ENCODE measurements at regions of chr11 and their contacts with region 1.

Region 1: GRCh38 chr11:58286249-58286648 is 18.2 kb upstream of the OR10W1 start:
- DNase-seq: peak in 1 of 3 donors; percentile 47
- ATAC-seq: peak; percentile 96
- H3K4me3 ChIP-seq: no peak overlapping the region
- H3K4me1 ChIP-seq: no peaks in the 10 kb centered on the region
- CTCF ChIP-seq: peak; percentile 53

Region 2: GRCh38 chr11:57815476-57815875 is 470.8 kb before region 1 on chr11:
- intact Hi-C with region 1: loop called in 1 of 2 experiments (anchors 5 kb)
- DNase-seq: no peak
- ATAC-seq: no peak
- H3K4me3 ChIP-seq: no peak overlapping the region
- H3K4me1 ChIP-seq: no peaks in the 10 kb centered on the region
- CTCF ChIP-seq: no peak

Region 3: DNA sequence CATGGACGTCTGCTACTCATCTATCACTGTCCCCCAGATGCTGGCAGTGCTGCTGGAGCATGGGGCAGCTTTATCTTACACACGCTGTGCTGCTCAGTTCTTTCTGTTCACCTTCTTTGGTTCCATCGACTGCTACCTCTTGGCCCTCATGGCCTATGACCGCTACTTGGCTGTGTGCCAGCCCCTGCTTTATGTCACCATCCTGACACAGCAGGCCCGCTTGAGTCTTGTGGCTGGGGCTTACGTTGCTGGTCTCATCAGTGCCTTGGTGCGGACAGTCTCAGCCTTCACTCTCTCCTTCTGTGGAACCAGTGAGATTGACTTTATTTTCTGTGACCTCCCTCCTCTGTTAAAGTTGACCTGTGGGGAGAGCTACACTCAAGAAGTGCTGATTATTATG is 106.6 kb before region 1 on chr11:
- intact Hi-C with region 1: no loop called
- DNase-seq: peak in 1 of 3 donors; percentile 48
- ATAC-seq: no peak
- H3K4me3 ChIP-seq: no peak overlapping the region
- H3K4me1 ChIP-seq: no peaks in the 10 kb centered on the region
- CTCF ChIP-seq: no peak

Region 4: GRCh38 chr11:59112494-59112893 is 826.2 kb after region 1 on chr11:
- intact Hi-C with region 1: no loop called
- DNase-seq: no peak
- ATAC-seq: no peak
- H3K4me3 ChIP-seq: no peak overlapping the region
- H3K4me1 ChIP-seq: peaks cover 3% of the 10 kb centered on the region
- CTCF ChIP-seq: no peak

Measured in mucosa of descending colon (tissue), 3 donors.